ENCODE measurements at regions of chr9 and their contacts with region 1.

Region 1: GRCh38 chr9:115198001-115198400 is 80.0 kb upstream of the TNC start:
- DNase-seq: peak; percentile 79
- ATAC-seq: peak; percentile 78
- H3K4me3 ChIP-seq: no peak overlapping the region
- H3K27ac ChIP-seq: no peak overlapping the region
- H3K4me1 ChIP-seq: peaks cover 6% of the 10 kb centered on the region
- H3K27me3 ChIP-seq: no peaks in the 10 kb centered on the region
- CTCF ChIP-seq: no peak
- POLR2A ChIP-seq: no peak
- RAD21 ChIP-seq: no peak

Region 2: DNA sequence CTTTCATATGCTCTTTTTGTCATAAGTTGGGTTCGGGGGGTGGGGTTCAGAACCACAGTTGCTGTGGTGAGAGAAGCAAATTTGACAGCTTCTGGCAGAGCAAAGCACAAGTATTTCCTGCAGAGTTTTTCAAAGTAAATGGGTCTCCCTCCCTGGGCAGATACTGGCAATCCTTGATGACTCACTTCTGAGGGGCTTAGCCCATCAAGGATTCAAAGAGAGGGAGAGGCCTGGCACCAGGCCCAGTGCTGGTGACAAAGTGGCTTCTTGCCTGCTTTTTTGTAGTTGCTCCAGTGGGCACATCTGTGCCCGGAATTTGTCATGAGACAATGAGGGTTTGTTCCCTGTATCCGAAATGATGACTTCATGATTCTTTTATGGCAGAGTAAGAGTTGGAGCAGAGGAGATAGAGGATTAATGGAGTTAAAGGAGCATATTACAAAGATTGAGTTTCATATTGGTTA is 33.5 kb before region 1 on chr9:
- CTCF ChIA-PET with region 1: no interaction called
- POLR2A ChIA-PET with region 1: interaction called, 13 read pairs
- dilution Hi-C with region 1: no loop called
- in situ Hi-C with region 1: no loop called
- intact Hi-C with region 1: no loop called
- DNase-seq: peak; percentile 33
- ATAC-seq: no peak
- H3K4me3 ChIP-seq: no peak overlapping the region
- H3K27ac ChIP-seq: no peak overlapping the region
- H3K4me1 ChIP-seq: peaks cover 5% of the 10 kb centered on the region; the same call in 1 of the 2 replicates
- H3K27me3 ChIP-seq: no peaks in the 10 kb centered on the region
- CTCF ChIP-seq: no peak
- POLR2A ChIP-seq: no peak
- RAD21 ChIP-seq: no peak

Region 3: GRCh38 chr9:115531410-115532125 is 333.6 kb after region 1 on chr9:
- CTCF ChIA-PET with region 1: no interaction called
- POLR2A ChIA-PET with region 1: no interaction called
- dilution Hi-C with region 1: no loop called
- in situ Hi-C with region 1: no loop called
- intact Hi-C with region 1: no loop called
- DNase-seq: peak; percentile 90
- ATAC-seq: peak; percentile 95
- H3K4me3 ChIP-seq: no peak overlapping the region
- H3K27ac ChIP-seq: no peak overlapping the region
- H3K4me1 ChIP-seq: peaks cover 2% of the 10 kb centered on the region; the same call in 1 of the 2 replicates
- H3K27me3 ChIP-seq: no peaks in the 10 kb centered on the region
- CTCF ChIP-seq: no peak
- POLR2A ChIP-seq: no peak
- RAD21 ChIP-seq: no peak

Measured in IMR-90 (cell line).